ENCODE measurements at regions of chr9 and their contacts with region 1.

Region 1: GRCh38 chr9:5596173-5596572 is 32.7 kb upstream of the RIC1 start:
- DNase-seq: no peak
- ATAC-seq: no peak

Region 2: DNA sequence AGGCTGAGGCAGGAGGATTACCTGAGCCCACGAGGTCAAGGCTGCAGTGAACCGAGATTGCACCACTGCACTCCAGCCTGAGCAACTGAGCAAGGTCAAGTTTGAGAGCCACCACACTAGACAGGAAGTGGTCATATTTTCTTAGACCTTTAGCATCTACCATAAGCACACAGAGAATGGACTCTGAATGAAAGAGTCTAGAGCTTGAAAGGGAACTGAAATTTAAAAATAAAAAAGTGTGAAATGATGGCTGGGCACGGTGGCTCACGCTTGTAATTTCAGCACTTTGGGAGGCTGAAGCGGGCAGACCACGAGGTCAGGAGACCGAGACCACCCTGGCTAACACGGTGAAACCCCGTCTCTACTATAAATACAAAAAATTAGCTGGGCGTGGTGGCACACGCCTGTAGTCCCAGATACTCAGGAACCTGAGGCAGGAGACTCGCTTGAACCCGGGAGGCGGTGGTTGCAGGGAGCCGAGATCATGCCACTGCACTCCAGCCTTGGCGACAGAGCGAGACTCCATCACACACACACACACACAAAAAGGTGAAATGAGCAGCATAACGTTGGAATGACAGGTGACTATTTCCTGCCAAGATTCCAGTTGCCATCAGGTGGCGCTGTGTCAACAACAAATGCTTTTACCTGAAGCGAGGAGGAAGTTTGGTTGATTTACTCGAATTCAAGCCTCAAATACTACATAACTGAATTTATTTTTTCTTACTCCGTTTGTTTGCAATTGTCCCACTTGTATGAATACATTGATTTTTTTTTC is 833.9 kb before region 1 on chr9:
- intact Hi-C with region 1: loop called (anchors 5 kb)
- DNase-seq: peak; percentile 76
- ATAC-seq: peak; percentile 80